ENCODE measurements at regions of chr16 and their contacts with region 1.

Region 1: GRCh38 chr16:2949803-2950724 is 14.0 kb upstream of the KREMEN2 start:
- DNase-seq: no peak
- ATAC-seq: no peak
- H3K4me3 Mint-ChIP-seq: no peak overlapping the region
- H3K27ac Mint-ChIP-seq: no peak overlapping the region
- H3K4me1 Mint-ChIP-seq: peaks cover 7% of the 10 kb centered on the region
- H3K27me3 Mint-ChIP-seq: no peaks in the 10 kb centered on the region; the same call in 1 of the 2 replicates
- CTCF ChIP-seq: no peak

Region 2: GRCh38 chr16:2894231-2894630 is 55.8 kb before region 1 on chr16:
- CTCF ChIA-PET with region 1: no interaction called
- POLR2A ChIA-PET with region 1: no interaction called
- DNase-seq: peak; percentile 34
- ATAC-seq: no peak; the same call in 1 of the 2 replicates
- H3K4me3 Mint-ChIP-seq: no peak overlapping the region
- H3K27ac Mint-ChIP-seq: no peak overlapping the region
- H3K4me1 Mint-ChIP-seq: peaks cover 8% of the 10 kb centered on the region
- H3K27me3 Mint-ChIP-seq: no peaks in the 10 kb centered on the region
- CTCF ChIP-seq: no peak

Region 3: GRCh38 chr16:2963723-2964474 is 13.8 kb after region 1 on chr16 and contains the start of gene KREMEN2:
- CTCF ChIA-PET with region 1: interaction called, 12 read pairs
- POLR2A ChIA-PET with region 1: interaction called, 4 read pairs
- DNase-seq: peak; percentile 83
- ATAC-seq: peak; percentile 20
- H3K4me3 Mint-ChIP-seq: peak within 1 kb of the TSS; percentile 89
- H3K27ac Mint-ChIP-seq: no peak within 1 kb of the TSS
- H3K4me1 Mint-ChIP-seq: peaks cover 15% of the 10 kb centered on the region
- H3K27me3 Mint-ChIP-seq: peaks cover 38% of the 10 kb centered on the region
- CTCF ChIP-seq: no peak
- total RNA-seq, gene KREMEN2: 7.5 to 8.6 TPM (median 8.5 TPM) in 3 replicates

Region 4: GRCh38 chr16:3106205-3106928 is 156.3 kb after region 1 on chr16:
- CTCF ChIA-PET with region 1: no interaction called
- POLR2A ChIA-PET with region 1: no interaction called
- DNase-seq: peak; percentile 95
- ATAC-seq: peak; percentile 76
- H3K4me3 Mint-ChIP-seq: peak overlapping the region; percentile 68
- H3K27ac Mint-ChIP-seq: peak overlapping the region; percentile 89
- H3K4me1 Mint-ChIP-seq: peaks cover 37% of the 10 kb centered on the region
- H3K27me3 Mint-ChIP-seq: no peaks in the 10 kb centered on the region; the same call in 1 of the 2 replicates
- CTCF ChIP-seq: no peak

Region 5: DNA sequence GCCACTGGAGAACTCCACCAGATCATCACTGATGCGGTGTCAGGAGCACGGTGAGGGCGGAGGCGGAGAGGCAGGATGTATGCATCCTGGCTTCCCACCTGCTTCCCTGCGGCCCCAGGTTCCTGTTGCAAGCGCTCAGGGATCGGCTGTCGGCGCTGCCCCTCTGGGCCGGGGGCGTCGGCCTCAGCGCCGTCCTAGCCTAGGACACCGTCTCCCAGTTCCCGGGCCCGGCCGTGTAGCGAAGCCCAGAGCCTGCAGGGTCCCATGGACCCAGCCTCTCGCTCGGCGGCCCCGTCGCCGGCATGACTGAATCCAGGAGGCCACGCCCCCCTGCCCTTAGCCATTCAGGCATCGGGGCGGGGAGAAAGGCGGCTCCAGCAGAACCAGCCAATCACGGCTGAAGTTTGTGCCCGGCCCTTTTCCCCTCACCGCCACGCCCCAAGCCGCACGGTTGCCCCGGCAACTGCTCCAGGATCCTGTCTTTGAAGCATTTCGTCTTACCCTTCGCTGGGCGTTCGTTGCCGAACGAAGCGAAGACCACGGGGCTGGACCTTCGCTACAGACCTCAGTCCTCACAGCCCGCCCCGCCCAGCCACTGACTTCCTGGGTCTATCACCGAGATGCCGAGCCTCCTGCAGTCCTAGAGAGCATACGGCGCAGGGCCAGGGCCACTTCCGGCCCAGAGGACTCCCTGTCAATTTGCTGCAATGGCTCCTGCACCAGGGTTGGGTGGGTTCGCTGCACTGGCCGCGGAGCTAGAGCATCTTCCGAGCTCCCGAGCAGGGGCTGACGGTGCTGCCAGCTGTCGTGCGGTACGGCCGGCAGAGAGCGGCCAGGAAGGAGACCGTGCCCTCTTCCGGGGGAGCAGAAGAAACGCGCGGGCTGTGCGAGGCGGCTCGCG is 174.2 kb after region 1 on chr16:
- CTCF ChIA-PET with region 1: no interaction called
- POLR2A ChIA-PET with region 1: no interaction called
- DNase-seq: peak; percentile 99
- ATAC-seq: peak; percentile 89
- H3K4me3 Mint-ChIP-seq: peak overlapping the region; percentile 88
- H3K27ac Mint-ChIP-seq: peak overlapping the region; percentile 96
- H3K4me1 Mint-ChIP-seq: peaks cover 37% of the 10 kb centered on the region
- H3K27me3 Mint-ChIP-seq: no peaks in the 10 kb centered on the region
- CTCF ChIP-seq: no peak

Region 6: DNA sequence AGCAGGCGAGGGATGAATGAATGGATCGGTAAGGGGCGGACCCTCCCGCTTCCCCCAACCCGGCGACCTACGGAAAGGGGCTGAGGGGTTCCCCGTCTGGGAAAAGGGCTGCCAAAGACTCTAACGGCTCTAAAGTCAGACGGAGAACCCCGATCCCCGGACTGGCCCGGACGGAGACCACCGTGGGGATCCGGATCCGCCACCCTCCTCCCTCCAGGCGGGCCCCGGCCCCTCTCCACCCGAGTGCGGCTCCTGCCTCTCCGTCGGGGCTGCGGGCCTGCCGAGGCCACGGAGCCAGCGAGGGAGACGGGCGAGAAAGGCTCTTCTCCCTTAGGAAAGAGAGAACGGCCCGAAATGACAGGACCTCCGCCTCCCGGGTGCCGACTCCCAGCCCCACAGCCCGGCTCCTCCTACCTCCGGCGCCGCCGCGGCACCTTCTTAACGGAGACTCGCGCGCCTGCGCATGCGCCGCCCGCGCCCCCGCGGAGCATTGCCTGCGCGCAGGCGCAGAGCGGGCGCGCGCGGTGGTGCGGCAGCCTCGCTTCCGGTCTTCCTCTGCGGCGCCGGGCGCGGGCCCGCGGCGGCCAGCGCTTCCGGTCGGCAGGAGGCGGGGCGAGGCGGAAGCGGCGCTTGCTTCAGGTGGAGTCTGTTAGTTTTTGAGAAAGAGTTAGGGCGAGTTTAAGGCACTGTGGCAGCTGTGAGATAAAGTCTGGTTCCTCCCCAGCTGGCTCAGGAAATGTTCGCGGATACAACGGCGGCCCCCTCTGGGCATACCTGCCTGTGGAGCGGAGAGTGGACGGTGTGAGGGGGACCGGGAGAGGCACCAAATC is 661.3 kb after region 1 on chr16 and contains the start of gene SLX4:
- CTCF ChIA-PET with region 1: no interaction called
- POLR2A ChIA-PET with region 1: no interaction called
- DNase-seq: peak; percentile 86
- ATAC-seq: peak; percentile 88
- H3K4me3 Mint-ChIP-seq: peak within 1 kb of the TSS; percentile 99
- H3K27ac Mint-ChIP-seq: peak within 1 kb of the TSS; percentile 98
- H3K4me1 Mint-ChIP-seq: peaks cover 23% of the 10 kb centered on the region
- H3K27me3 Mint-ChIP-seq: no peaks in the 10 kb centered on the region
- CTCF ChIP-seq: no peak
- total RNA-seq, gene SLX4: 16.3 to 18.0 TPM (median 16.7 TPM) in 3 replicates

Measured in WTC11 (cell line).